Gastrocnemius medialis (tissue), 4 donors: ENCODE measurements at regions of chr21 and their contacts with region 1.

Region 1: GRCh38 chr21:38733973-38734546 is 71.7 kb upstream of the ETS2 start:
- DNase-seq: peak; percentile 64 to 72
- ATAC-seq: peak; percentile 87 to 94
- H3K4me3 ChIP-seq: peak overlapping the region; percentile 30 to 34 (median 32)
- H3K27ac ChIP-seq: peak overlapping the region; percentile 17 to 44 (median 36)
- H3K4me1 ChIP-seq: peaks cover 5 to 6% of the 10 kb centered on the region in 2 donors
- H3K27me3 ChIP-seq: peaks cover 0 to 3% (median 0%) of the 10 kb centered on the region in 3 donors
- CTCF ChIP-seq: peak; percentile 76 to 96 (median 92)
- POLR2A ChIP-seq: no peak

Region 2: DNA sequence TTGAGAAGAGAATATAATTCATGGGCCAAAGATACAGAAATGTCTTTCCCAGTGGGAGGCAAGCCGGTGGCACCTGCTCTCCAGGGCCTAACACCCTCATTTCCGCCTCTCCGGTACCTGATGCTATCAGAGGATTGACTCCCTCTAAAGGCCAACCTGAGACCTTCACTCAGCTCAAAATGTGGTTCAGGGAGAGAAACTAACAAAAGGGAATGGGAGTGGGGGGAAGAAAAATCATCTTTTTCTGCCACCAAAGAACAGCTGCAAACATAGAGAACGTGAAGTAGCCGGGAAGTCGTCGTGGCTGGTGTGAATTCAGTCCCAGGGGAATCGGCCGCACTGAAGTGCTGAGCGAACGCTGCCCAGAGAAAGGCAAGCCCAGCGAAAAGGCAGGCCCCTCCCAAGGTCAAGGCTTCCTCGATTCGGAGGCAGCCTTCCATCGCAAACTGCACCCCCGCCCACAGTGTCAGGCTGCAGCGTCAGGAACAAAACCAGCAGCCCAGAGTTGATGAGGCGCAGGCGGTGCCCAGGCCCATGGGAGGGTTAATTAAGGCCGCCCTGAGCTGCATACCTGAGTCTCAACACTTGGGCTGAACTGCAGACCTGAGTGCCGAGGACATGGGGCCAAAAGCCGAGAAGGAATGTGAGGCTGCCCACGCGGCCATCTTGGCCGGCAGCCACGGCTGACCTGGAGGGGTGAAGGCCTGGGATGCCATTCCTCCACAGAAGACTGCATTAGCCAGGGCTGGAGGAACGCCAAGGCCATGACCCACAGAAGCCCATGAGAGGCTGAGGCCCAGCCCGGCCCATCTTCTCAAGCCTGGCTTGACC is 289.0 kb after region 1 on chr21:
- in situ Hi-C with region 1: no loop called
- intact Hi-C with region 1: loop called (anchors 5 kb)
- DNase-seq: peak in 1 of 2 donors; percentile 32
- ATAC-seq: peak; percentile 80 to 83
- H3K4me3 ChIP-seq: peak overlapping the region in 2 of 4 donors; percentile 4 to 28
- H3K27ac ChIP-seq: peak overlapping the region; percentile 63 to 73 (median 69)
- H3K4me1 ChIP-seq: peaks cover 10 to 14% of the 10 kb centered on the region in 2 donors
- H3K27me3 ChIP-seq: no peaks in the 10 kb centered on the region
- CTCF ChIP-seq: peak in 4 of 5 experiments; percentile 28 to 46 (median 44)
- POLR2A ChIP-seq: no peak

Region 3: GRCh38 chr21:39125752-39126485 is 391.9 kb after region 1 on chr21:
- in situ Hi-C with region 1: loop called in 1 of 4 experiments (anchors 10 kb)
- intact Hi-C with region 1: loop called (anchors 1 kb)
- DNase-seq: peak in 1 of 2 donors; percentile 46
- ATAC-seq: peak; percentile 91 to 99
- H3K4me3 ChIP-seq: no peak overlapping the region
- H3K27ac ChIP-seq: peak overlapping the region in 2 of 4 donors; percentile 9 to 39
- H3K4me1 ChIP-seq: peaks cover 6 to 9% of the 10 kb centered on the region in 2 donors
- H3K27me3 ChIP-seq: no peaks in the 10 kb centered on the region
- CTCF ChIP-seq: peak; percentile 54 to 67 (median 65)
- POLR2A ChIP-seq: no peak

Region 4: GRCh38 chr21:39137248-39138178 is 403.5 kb after region 1 on chr21:
- in situ Hi-C with region 1: loop called in 3 of 4 experiments (anchors 5 kb)
- intact Hi-C with region 1: loop called (anchors 1 kb)
- DNase-seq: no peak
- ATAC-seq: no peak
- H3K4me3 ChIP-seq: no peak overlapping the region
- H3K27ac ChIP-seq: no peak overlapping the region
- H3K4me1 ChIP-seq: no peaks in the 10 kb centered on the region
- H3K27me3 ChIP-seq: no peaks in the 10 kb centered on the region
- CTCF ChIP-seq: no peak
- POLR2A ChIP-seq: no peak